Breast epithelium (tissue), 4 donors: ENCODE measurements at regions of chr2 and their contacts with region 1.

Region 1: GRCh38 chr2:10133007-10133647 is 10.6 kb downstream of the RRM2 start:
- DNase-seq: no peak
- H3K4me3 ChIP-seq: no peak overlapping the region
- H3K27ac ChIP-seq: no peak overlapping the region
- H3K4me1 ChIP-seq: no peaks in the 10 kb centered on the region
- H3K27me3 ChIP-seq: no peaks in the 10 kb centered on the region
- CTCF ChIP-seq: no peak
- POLR2A ChIP-seq: no peak

Region 2: DNA sequence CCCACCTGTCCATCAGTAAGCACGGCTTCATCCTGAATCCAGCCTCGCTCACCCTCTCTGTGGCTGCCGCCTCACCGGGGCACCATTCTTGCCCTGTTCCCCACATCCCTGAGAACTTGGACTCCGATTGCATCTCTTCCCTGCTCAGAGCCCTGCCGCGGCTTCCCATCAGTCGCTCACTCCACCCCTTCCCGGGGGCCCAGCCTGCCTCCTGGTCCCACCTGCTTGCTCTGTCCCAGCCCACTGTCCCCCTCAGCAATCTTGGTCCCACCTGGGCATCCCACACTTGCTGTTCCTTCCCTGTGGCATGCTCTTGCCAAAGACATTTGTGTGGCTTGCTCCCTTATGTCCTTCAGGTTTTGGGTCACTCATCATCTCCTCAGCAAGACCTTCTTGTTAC is 1457.1 kb after region 1 on chr2:
- intact Hi-C with region 1: no loop called
- DNase-seq: no peak
- H3K4me3 ChIP-seq: no peak overlapping the region
- H3K27ac ChIP-seq: no peak overlapping the region
- H3K4me1 ChIP-seq: no peaks in the 10 kb centered on the region
- H3K27me3 ChIP-seq: no peaks in the 10 kb centered on the region
- CTCF ChIP-seq: no peak
- POLR2A ChIP-seq: no peak

Region 3: GRCh38 chr2:11602563-11603204 is 1469.6 kb after region 1 on chr2:
- intact Hi-C with region 1: loop called (anchors 5 kb)
- DNase-seq: no peak
- H3K4me3 ChIP-seq: no peak overlapping the region
- H3K27ac ChIP-seq: no peak overlapping the region
- H3K4me1 ChIP-seq: no peaks in the 10 kb centered on the region
- H3K27me3 ChIP-seq: no peaks in the 10 kb centered on the region
- CTCF ChIP-seq: no peak
- POLR2A ChIP-seq: no peak